RWPE1 (cell line): ENCODE measurements at regions of chrX and their contacts with region 1.

Region 1: GRCh38 chrX:68828740-68829552 is at the start of gene EFNB1:
- DNase-seq: peak; percentile 80
- H3K27ac ChIP-seq: peak within 1 kb of the TSS; percentile 92
- CTCF ChIP-seq: no peak

Region 2: GRCh38 chrX:68842781-68843581 is 14.0 kb after region 1 on chrX:
- CTCF ChIA-PET with region 1: interaction called, 7 read pairs
- POLR2A ChIA-PET with region 1: interaction called, 14 read pairs
- DNase-seq: no peak
- H3K27ac ChIP-seq: peak overlapping the region; percentile 82
- CTCF ChIP-seq: no peak

Region 3: DNA sequence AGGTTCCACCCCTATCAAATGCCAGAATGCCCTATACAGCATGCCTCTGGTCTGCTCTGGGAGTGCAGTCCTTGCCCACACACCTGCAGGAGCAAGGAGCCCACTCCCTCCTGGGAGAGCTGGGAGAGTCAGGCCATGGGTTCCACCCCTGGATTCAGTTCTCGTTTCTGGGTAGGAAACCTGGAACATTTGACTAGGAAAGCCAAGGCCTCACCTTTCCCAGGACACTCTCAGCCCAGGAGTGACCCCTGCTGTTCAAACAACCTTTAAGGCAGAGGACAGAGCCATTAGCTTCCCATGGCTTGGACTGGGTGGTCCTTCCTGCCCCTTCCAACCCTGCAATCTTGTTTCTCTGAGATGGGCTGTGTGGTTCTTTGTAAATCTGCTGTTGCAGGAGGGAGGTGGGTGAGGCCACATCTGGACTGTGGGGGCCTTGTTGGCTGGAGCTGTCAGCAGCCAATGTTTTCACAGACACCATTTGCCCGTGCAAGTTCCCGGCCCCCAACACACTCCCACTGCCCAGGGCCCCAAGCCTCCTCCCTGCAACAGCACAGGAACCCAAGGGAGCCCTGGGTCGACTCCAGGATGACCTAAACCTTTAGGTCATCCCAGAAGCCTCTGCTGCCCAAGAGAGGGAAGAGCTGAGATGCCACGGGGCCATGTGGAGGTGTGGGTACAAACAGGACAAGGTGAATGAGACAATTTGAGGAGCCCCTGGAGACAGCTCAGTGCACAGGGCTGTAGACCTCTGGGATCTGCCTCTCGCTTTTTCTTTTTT is 231.9 kb after region 1 on chrX:
- CTCF ChIA-PET with region 1: interaction called, 14 read pairs
- POLR2A ChIA-PET with region 1: interaction called, 7 read pairs
- DNase-seq: peak; percentile 25
- H3K27ac ChIP-seq: no peak overlapping the region
- CTCF ChIP-seq: no peak; the same call in 1 of the 2 replicates

Region 4: GRCh38 chrX:69222103-69223090 is 393.5 kb after region 1 on chrX:
- CTCF ChIA-PET with region 1: interaction called, 37 read pairs
- POLR2A ChIA-PET with region 1: interaction called, 6 read pairs
- DNase-seq: peak; percentile 76
- H3K27ac ChIP-seq: peak overlapping the region; percentile 30; the same call in 1 of the 2 replicates
- CTCF ChIP-seq: peak; percentile 67